Psoas muscle (tissue), 8 donors: ENCODE measurements at regions of chr16 and their contacts with region 1.

Region 1: DNA sequence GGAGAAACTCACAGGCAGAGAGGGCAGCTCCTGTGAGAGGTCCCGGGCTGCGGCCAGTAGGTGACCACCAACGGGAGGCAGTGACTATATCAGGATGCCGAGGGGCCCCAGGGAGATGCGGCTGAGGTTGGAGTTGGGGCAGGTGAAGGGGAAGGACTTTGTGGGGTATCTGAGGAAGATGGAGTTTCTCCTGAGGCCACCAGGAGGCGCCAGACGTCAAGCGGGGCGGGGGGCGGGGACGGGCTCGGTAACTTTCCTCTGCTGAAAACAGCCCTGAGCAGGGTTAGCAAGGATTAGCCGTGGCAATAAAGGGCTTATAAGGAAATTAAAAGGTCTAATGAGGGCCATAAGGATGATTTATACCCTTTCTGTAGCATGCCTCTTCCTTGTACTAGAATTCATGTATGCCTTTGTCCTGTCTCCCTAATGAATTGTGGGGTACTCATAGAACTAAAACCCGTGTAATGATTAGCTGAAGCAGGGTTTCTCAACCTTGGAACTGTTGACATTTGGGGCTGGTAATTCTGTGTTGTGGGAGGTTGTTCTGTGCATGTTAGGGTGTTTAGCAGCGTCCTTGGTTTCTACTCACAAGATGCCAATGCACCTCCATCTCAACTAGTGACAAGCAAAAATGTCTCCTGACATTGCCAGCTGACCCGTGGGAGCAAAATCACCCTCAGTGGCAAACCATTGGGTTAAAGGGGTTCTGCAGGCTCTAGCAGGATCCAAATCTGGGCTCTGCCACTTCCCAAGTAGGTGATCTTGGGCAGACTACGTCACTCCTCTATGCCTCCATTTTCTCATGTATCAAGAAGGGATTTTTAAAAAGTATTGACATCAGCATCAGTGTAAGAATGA is 74.8 kb upstream of the GRIN2A start:
- DNase-seq: peak in 1 of 2 donors; percentile 26
- ATAC-seq: peak in 2 of 4 donors; percentile 57 to 65
- H3K4me3 ChIP-seq: no peak overlapping the region
- H3K27ac ChIP-seq: no peak overlapping the region
- H3K4me1 ChIP-seq: no peaks in the 10 kb centered on the region
- H3K27me3 ChIP-seq: no peaks in the 10 kb centered on the region
- CTCF ChIP-seq: peak; percentile 57

Region 2: DNA sequence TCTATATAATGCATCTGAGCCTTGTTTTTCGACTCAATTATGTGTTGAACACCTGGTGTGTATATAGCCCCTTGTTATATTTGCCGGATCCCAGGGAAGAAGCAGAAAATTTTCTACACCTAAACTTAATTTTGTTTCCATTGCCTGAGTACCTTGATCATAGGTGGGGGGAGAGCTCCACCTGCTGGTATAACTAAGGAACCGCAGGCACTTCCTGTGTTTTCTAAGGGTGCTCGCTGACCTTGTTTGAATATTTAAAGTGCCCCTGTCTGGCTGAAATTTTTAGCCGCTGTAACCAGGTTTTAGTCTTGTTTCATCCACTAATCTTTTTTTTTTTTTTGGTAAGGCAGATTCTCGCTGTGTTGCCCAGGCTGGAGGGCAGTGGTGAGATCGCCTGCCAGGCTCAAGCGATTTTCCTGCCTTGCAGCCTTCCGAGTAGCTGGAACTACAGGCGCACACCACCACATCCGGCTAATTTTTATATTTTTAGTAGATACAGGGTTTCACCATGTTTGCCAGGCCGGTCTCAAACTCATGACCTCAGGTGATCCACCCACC is 480.1 kb after region 1 on chr16:
- intact Hi-C with region 1: loop called in 1 of 2 experiments (anchors 5 kb)
- DNase-seq: no peak
- ATAC-seq: peak; percentile 53 to 78 (median 60)
- H3K4me3 ChIP-seq: peak overlapping the region; percentile 19
- H3K27ac ChIP-seq: peak overlapping the region; percentile 94
- H3K4me1 ChIP-seq: peaks cover 20% of the 10 kb centered on the region
- H3K27me3 ChIP-seq: no peaks in the 10 kb centered on the region
- CTCF ChIP-seq: peak; percentile 99